Cardiac septum (tissue), 1 donor: ENCODE measurements at regions of chr1 and their contacts with region 1.

Region 1: GRCh38 chr1:178275553-178275952 is 181.6 kb downstream of the RASAL2 start:
- DNase-seq: no peak

Region 2: DNA sequence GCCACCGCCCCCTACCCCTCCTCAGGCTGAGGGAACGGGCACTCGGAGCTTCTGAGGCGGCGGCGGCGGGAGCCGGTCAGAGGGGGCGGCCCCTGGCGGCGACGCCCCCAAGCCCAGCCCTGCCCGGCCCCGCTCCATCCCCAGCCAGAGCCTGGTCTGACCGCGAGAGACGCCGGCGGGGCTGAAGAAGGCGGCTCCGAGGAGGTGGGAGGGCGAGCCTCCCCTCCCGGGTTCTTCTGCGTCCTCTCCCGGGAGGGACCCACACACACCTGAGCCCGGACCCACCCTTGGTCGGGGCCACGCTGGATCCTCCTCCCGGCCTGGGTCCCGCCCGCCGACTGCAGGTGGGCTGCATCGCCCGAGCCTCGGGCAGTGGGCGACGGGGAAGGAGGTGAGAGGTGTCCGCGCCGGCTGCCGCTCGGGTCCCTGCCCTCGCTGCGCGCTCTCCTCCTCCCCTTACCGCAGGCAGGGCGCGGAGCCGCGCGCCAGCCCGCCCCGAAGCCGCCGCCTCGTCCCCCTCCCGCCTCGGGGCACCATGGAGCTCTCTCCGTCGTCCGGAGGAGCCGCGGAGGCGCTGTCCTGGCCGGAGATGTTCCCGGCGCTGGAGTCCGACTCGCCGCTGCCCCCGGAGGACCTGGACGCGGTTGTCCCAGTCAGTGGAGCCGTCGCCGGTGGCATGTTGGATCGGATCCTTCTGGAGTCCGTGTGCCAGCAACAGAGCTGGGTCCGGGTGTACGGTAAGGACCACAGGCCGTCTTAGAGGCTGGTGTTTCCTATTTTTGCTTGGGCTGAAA is 181.4 kb before region 1 on chr1 and contains the start of gene RASAL2:
- intact Hi-C with region 1: no loop called
- DNase-seq: peak; percentile 81
- total RNA-seq, gene RASAL2: 45.8 TPM

Region 3: DNA sequence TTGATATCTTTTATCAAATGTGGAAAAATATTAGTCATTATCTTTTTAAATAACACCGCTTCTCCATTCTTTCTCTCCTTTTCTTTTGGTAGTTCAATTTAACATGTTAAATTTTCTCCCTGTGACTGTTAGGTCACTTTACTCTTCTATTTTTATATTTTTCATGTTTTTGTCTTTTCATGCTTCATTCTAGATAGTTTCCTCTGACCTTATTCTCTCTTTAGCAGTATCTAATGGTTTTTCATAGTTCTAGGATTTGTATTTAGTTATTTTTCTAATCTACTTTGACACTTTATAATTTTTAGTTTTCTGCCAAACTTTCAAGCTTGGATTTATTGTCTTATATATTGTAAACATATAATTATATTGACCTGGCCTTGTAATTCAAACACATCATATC is 65.6 kb before region 1 on chr1:
- intact Hi-C with region 1: loop called (anchors 5 kb)
- DNase-seq: no peak